ENCODE measurements at regions of chr1 and their contacts with region 1.

Region 1: GRCh38 chr1:203216274-203217138 is 13.0 kb downstream of the CHIT1 start:
- DNase-seq: peak in 2 of 6 donors; percentile 42 to 67
- ATAC-seq: peak; percentile 72 to 91 (median 87)
- H3K4me3 ChIP-seq: no peak overlapping the region
- H3K27ac ChIP-seq: no peak overlapping the region
- H3K4me1 ChIP-seq: no peaks in the 10 kb centered on the region
- H3K27me3 ChIP-seq: no peaks in the 10 kb centered on the region
- CTCF ChIP-seq: peak; percentile 68 to 79 (median 74)

Region 2: DNA sequence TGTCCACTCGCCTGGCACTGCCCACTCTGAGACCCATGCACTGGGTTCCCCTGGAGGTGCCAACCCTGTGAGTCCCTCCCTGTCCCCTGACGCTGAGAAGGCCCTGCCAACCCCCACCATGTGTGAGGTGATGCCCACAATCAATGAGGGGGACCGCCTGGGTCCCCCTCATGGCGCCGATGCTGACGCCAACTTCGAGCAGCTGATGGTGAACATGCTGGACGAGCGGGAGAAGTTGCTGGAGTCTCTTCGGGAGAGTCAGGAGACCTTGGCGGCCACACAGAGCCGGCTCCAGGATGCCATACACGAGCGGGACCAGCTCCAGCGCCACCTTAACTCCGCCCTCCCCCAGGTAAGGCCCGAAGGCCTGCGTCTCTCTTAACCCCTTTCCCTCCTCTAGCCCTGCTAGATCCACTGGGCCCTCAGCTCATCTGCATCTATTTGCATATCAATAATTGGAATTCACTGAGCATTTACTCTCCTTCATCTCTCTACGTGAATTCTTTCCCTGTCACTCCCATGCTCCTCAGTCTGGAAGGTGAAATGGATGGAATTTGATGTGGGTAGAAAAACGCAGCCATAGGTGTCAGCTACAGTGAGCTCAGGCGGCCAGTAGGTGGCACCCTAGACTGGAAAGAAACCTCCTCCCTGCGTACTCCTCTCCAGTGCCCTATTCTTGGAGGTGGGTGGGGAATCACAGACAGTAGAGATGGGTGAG is 177.5 kb before region 1 on chr1:
- intact Hi-C with region 1: loop called in 2 of 3 experiments (anchors 5 kb)
- DNase-seq: peak in 5 of 6 donors; percentile 52 to 83 (median 73)
- ATAC-seq: peak; percentile 91 to 96 (median 93)
- H3K4me3 ChIP-seq: no peak overlapping the region
- H3K27ac ChIP-seq: no peak overlapping the region
- H3K4me1 ChIP-seq: no peaks in the 10 kb centered on the region
- H3K27me3 ChIP-seq: no peaks in the 10 kb centered on the region
- CTCF ChIP-seq: peak; percentile 79 to 93 (median 84)

Region 3: DNA sequence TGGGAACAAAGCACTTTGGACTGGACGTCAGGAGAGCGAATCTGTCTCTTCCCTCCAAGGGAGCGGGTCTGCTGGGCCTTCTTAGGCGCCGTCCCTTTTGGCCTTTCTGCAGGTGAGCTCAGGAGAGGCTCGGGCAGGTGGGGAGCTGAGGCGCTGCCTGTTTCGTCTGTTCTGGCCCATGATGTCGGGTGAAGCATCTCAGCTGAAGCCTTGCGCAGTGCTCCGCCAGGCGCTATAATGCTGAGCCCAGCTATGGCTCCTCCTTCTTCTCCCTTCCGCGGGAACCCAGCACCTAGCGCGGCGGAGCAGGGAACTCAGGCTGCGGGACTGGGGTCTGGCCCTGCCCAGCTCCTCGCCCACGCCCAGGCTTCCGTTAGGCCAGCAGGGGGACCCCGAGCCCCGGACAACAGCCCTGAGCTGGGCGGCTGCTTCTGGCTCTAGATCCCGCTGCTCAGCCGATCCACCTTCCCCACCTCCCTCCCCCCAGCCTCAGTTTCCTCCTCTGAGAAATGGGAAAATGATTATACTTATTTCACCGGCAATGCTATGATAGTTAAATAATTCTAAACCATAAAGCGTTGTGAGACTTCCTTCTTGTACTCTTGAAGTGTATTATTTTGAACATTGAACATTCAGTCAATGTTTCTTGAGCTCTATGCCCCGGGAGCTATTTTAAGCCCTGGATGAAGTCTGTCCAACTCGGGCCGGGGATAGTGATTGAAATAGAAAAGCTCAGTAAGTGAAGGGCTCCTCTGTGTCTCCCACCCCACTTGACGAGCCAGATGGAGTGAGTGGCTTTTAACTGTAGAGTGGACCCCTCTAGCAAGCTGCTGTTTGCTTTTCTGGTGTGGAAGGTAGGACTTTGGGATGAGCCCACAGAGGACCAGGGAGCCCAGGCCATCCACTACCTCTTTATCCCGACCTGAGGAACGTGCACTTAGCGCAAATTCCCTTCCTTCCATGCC is 98.6 kb before region 1 on chr1:
- intact Hi-C with region 1: loop called in 2 of 3 experiments (anchors 5 kb)
- DNase-seq: peak; percentile 54 to 93 (median 80)
- ATAC-seq: peak; percentile 92 to 99 (median 98)
- H3K4me3 ChIP-seq: no peak overlapping the region
- H3K27ac ChIP-seq: no peak overlapping the region
- H3K4me1 ChIP-seq: no peaks in the 10 kb centered on the region
- H3K27me3 ChIP-seq: peaks cover 0 to 6% (median 0%) of the 10 kb centered on the region in 4 donors
- CTCF ChIP-seq: peak; percentile 58 to 86 (median 75)

Region 4: GRCh38 chr1:203124546-203125317 is 91.8 kb before region 1 on chr1:
- intact Hi-C with region 1: loop called in 2 of 3 experiments (anchors 5 kb)
- DNase-seq: no peak
- ATAC-seq: no peak
- H3K4me3 ChIP-seq: no peak overlapping the region
- H3K27ac ChIP-seq: no peak overlapping the region
- H3K4me1 ChIP-seq: peaks cover 8 to 11% (median 8%) of the 10 kb centered on the region in 3 donors
- H3K27me3 ChIP-seq: peaks cover 0 to 3% (median 0%) of the 10 kb centered on the region in 4 donors
- CTCF ChIP-seq: no peak